Aorta (tissue), 5 donors: ENCODE measurements at regions of chr9 and their contacts with region 1.

Region 1: GRCh38 chr9:3525836-3526164 is at the start of gene RFX3:
- DNase-seq: peak; percentile 94 to 97
- ATAC-seq: peak; percentile 97
- H3K4me3 ChIP-seq: peak within 1 kb of the TSS; percentile 83 to 91
- H3K27ac ChIP-seq: peak within 1 kb of the TSS; percentile 98 to 99
- H3K4me1 ChIP-seq: no peaks in the 10 kb centered on the region
- H3K27me3 ChIP-seq: no peaks in the 10 kb centered on the region
- total RNA-seq, gene RFX3: 10.5 to 22.4 TPM

Region 2: DNA sequence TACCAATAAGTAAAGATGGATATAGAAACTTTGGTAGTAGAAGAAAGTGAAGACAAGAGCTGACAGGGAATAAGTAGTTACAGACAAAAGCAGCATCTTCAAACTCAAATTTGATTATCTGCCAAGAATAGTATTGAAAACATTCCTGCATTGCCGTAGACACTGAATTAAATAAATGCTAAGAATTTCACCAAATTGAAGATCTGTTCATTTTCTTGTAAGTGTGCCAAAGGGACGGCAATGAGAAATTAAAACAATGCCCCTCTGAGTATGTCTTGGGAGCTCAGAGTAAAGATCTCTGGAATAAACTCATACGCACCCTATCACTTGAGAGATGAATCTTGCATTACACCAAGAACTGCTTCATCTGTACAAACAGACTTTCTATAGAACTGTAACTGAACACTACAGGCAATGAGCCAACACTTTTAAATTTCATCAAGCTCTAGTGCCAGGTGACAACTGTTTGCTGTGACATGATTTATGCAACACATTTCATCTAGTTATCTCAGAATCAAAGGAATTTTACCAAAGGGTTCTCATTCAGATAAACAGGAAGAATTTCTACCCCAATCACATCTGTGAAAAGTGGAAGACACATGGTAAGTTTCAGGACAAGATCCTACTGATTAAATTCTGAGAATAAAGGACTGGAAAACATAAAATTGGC is 66.9 kb before region 1 on chr9:
- intact Hi-C with region 1: no loop called
- DNase-seq: no peak
- ATAC-seq: no peak
- H3K4me3 ChIP-seq: no peak overlapping the region
- H3K27ac ChIP-seq: no peak overlapping the region
- H3K4me1 ChIP-seq: no peaks in the 10 kb centered on the region
- H3K27me3 ChIP-seq: no peaks in the 10 kb centered on the region

Region 3: DNA sequence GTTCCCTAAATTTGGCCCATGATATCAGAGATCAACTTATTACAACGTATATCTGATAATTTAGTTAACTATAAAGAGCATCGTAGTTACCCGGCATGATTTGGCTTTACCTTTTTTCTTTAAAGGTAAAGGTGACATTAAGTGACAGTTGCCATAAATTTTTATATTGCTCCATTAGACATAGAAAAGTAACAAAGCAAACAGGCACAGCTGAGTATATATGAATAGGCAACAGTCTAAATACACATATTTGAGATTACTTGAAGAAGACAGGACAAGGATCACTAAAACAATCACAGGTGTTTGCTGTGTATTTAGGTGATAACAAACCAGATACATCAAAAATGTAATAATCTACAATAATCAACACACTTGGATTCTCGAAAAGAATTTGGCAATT is 34.8 kb before region 1 on chr9:
- intact Hi-C with region 1: no loop called
- DNase-seq: no peak
- ATAC-seq: no peak
- H3K4me3 ChIP-seq: no peak overlapping the region
- H3K27ac ChIP-seq: no peak overlapping the region
- H3K4me1 ChIP-seq: no peaks in the 10 kb centered on the region
- H3K27me3 ChIP-seq: no peaks in the 10 kb centered on the region

Region 4: DNA sequence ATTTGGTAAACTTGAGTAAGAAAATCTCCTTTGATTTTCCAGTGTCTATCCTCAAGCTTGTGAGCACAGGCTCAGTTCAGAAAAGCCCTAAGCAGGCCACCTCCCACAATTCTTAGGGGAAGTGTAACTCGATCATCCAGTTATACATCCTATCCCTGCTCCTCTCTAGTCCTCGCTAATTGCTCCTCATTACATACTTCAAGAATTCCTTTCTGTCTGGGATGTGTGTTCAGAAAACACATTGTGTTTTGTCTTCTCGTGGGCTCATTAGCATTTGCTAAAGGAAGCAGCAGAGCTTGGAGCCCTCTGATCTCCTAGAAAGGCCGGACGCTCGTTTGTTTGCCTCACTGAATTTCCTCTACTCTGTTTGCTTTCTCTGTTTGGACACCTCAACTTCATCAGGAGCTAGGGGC is 268.2 kb after region 1 on chr9:
- intact Hi-C with region 1: no loop called
- DNase-seq: no peak
- ATAC-seq: no peak
- H3K4me3 ChIP-seq: peak overlapping the region in 1 of 2 donors; percentile 18
- H3K27ac ChIP-seq: peak overlapping the region; percentile 4 to 25
- H3K4me1 ChIP-seq: no peaks in the 10 kb centered on the region
- H3K27me3 ChIP-seq: no peaks in the 10 kb centered on the region

Region 5: DNA sequence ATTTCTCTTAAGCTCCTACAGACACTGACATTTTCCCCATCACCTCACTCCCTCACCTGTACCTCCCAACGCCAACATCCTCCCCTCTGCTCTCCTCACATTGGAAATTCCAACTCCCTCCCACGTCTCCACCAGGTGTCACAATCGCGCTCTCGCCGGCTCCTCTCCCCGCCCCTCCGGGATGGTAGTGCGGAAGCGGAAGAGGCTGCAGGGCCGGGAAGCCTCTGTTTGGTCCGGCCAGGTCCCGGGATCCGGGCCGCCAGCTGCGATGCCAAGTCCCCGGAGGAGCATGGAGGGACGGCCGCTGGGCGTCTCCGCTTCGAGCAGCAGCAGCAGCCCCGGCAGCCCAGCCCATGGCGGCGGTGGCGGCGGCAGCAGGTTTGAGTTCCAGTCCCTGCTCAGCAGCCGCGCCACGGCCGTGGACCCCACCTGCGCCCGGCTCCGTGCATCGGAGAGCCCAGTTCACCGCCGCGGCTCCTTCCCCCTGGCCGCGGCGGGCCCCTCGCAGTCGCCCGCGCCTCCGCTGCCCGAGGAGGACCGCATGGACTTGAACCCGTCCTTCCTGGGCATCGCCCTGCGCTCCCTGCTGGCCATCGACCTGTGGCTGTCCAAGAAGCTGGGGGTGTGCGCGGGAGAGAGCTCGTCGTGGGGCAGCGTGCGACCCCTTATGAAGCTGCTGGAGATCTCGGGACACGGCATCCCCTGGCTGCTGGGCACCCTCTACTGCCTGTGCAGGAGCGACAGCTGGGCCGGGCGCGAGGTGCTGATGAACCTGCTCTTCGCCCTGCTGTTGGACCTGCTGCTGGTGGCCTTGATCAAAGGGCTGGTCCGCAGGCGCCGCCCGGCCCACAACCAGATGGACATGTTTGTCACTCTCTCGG is 1136.5 kb after region 1 on chr9 and contains the start of gene PLPP6:
- intact Hi-C with region 1: loop called in 1 of 2 experiments (anchors 10 kb)
- DNase-seq: peak; percentile 92 to 95
- ATAC-seq: peak; percentile 96
- H3K4me3 ChIP-seq: peak within 1 kb of the TSS; percentile 61 to 62
- H3K27ac ChIP-seq: peak within 1 kb of the TSS; percentile 18 to 53
- H3K4me1 ChIP-seq: peaks cover 0 to 4% of the 10 kb centered on the region in 2 donors
- H3K27me3 ChIP-seq: no peaks in the 10 kb centered on the region
- total RNA-seq, gene PLPP6: 4.5 to 4.8 TPM